HEK293 (cell line): ENCODE measurements at regions of chr2 and their contacts with region 1.

Region 1: GRCh38 chr2:222318026-222318711 is 19.4 kb upstream of the PAX3 start:
- H3K4me3 ChIP-seq: peak overlapping the region; percentile 51
- H3K27ac ChIP-seq: peak overlapping the region; percentile 95
- H3K4me1 ChIP-seq: peaks cover 5% of the 10 kb centered on the region
- CTCF ChIP-seq: peak; percentile 44

Region 2: GRCh38 chr2:222024932-222025880 is 293.0 kb before region 1 on chr2:
- CTCF ChIA-PET with region 1: interaction called, 11 read pairs
- POLR2A ChIA-PET with region 1: no interaction called
- H3K4me3 ChIP-seq: no peak overlapping the region
- H3K27ac ChIP-seq: no peak overlapping the region
- H3K4me1 ChIP-seq: peaks cover 2% of the 10 kb centered on the region; the same call in 1 of the 2 replicates
- CTCF ChIP-seq: peak; percentile 34

Region 3: GRCh38 chr2:222057347-222058073 is 260.7 kb before region 1 on chr2:
- CTCF ChIA-PET with region 1: interaction called, 15 read pairs
- POLR2A ChIA-PET with region 1: no interaction called
- H3K4me3 ChIP-seq: no peak overlapping the region
- H3K27ac ChIP-seq: no peak overlapping the region
- H3K4me1 ChIP-seq: peaks cover 6% of the 10 kb centered on the region; the same call in 1 of the 2 replicates
- CTCF ChIP-seq: peak; percentile 79; the same call in 1 of the 2 replicates

Region 4: DNA sequence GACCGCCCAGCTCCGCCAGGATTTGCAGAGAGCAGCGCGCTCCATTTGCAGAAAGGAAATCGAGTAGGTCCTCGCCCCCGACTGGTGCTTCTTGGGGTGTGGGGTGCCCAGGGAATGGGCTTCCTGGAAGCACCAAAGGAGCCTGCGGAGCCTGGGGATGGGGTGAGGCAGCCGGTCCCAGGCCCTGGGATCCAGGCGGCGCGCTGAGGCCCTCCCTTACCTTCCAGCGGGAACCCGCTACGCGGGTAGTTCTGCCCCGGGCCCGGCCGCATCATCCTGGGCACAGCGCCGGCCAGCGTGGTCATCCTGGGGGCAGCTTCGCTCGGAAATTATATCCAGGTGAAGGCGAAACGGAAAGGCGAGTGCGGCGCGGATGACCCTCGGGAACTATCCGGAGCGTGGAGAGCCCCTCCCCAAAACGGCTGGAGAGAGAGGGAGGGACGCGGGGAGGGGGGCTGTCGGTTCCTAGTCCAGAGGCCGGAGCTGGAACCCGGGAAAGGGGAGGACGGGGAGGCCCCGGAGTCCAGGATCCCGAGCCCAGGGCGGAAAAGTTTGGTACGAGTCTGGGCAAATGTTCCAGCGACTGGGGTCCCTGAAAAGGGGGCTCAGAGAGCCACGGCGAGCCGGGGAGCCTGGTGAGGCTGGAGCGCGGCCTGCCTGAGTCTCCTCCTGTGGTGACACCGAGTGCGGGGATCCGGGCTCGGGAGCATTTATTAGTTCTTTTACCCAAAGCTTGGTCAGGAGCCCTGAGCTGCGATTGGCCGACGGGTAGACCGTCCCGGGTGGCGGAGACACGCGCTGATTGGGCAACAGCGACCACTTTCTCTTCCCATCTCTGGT is 19.6 kb before region 1 on chr2 and contains the start of gene PAX3:
- CTCF ChIA-PET with region 1: interaction called, 3 read pairs
- POLR2A ChIA-PET with region 1: interaction called, 31 read pairs
- H3K4me3 ChIP-seq: peak within 1 kb of the TSS; percentile 65
- H3K27ac ChIP-seq: peak within 1 kb of the TSS; percentile 84
- H3K4me1 ChIP-seq: peaks cover 8% of the 10 kb centered on the region
- CTCF ChIP-seq: no peak; the same call in 1 of the 2 replicates

Region 5: DNA sequence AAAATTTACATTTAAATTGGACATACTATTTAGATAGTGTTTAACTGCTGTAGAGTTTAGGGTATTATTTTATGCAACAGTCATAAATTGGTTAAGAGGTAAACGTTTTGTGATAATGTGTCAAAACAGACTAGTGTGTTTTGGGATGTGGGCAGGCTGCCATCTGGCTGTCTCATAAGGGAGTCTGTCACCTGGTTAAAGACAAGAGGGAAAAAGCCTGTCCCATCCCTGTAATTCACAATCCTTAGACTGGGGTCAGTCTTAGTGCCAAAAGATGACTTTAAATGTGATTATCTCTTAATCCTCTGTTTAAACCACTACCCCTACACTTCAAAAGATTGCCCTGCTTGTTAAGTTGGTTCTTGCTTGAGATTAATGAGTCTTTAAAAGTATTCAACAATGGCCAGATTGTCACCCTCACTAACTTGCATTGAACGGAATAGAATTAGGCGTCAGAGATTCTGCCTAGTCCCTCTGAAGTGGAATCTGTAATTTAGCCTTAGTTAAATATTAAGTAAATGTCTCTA is 165.4 kb after region 1 on chr2:
- CTCF ChIA-PET with region 1: interaction called, 29 read pairs
- POLR2A ChIA-PET with region 1: no interaction called
- H3K4me3 ChIP-seq: no peak overlapping the region
- H3K27ac ChIP-seq: no peak overlapping the region
- H3K4me1 ChIP-seq: peaks cover 16% of the 10 kb centered on the region
- CTCF ChIP-seq: peak; percentile 64

Region 6: GRCh38 chr2:222561817-222562645 is 243.9 kb after region 1 on chr2:
- CTCF ChIA-PET with region 1: interaction called, 39 read pairs
- POLR2A ChIA-PET with region 1: interaction called, 4 read pairs
- H3K4me3 ChIP-seq: no peak overlapping the region
- H3K27ac ChIP-seq: no peak overlapping the region
- H3K4me1 ChIP-seq: no peaks in the 10 kb centered on the region
- CTCF ChIP-seq: no peak

Region 7: GRCh38 chr2:222613715-222614331 is 295.7 kb after region 1 on chr2:
- CTCF ChIA-PET with region 1: interaction called, 18 read pairs
- POLR2A ChIA-PET with region 1: no interaction called
- H3K4me3 ChIP-seq: no peak overlapping the region
- H3K27ac ChIP-seq: no peak overlapping the region
- H3K4me1 ChIP-seq: no peaks in the 10 kb centered on the region
- CTCF ChIP-seq: 0 out of 2 replicates have a peak, but pooled peaks have one; percentile 26

Region 8: DNA sequence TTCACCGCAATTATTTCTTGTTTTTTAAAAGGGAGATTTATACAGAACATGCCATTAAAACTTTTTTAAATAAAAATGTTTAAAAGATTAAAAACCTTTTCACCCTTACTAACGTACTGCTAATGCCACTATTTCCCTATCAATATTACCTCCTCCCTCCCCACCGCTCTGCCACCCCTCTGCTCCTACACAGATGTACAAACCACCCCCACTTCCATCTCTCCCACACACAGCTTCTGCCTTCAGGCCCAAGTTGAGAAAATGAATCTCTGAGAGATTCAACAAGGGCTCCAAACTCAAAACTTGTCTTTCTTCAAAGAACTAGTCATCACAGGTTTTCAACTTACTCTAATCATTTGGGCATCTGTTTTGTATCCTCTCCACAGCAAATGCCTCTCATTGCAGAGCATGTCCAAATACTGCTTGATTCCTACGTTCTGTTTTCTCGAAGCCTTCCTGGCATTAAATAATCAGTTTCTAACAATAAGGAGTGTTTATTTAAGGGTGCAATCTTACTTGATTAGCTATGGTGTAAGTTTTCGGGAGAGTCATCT is 305.7 kb after region 1 on chr2:
- CTCF ChIA-PET with region 1: no interaction called
- POLR2A ChIA-PET with region 1: no interaction called
- H3K4me3 ChIP-seq: no peak overlapping the region
- H3K27ac ChIP-seq: no peak overlapping the region
- H3K4me1 ChIP-seq: no peaks in the 10 kb centered on the region
- CTCF ChIP-seq: no peak